ENCODE measurements at regions of chr6 and their contacts with region 1.

Region 1: GRCh38 chr6:132887204-132887603 is 72.8 kb downstream of the RPS12 start:
- DNase-seq: no peak
- H3K4me3 ChIP-seq: no peak overlapping the region
- H3K4me3 Mint-ChIP-seq: no peak overlapping the region
- H3K27ac Mint-ChIP-seq: no peak overlapping the region
- H3K4me1 ChIP-seq: no peaks in the 10 kb centered on the region
- H3K4me1 Mint-ChIP-seq: no peaks in the 10 kb centered on the region
- H3K27me3 ChIP-seq: no peaks in the 10 kb centered on the region; the same call in 1 of the 2 replicates
- H3K27me3 Mint-ChIP-seq: peaks cover 10% of the 10 kb centered on the region
- CTCF ChIP-seq: no peak

Region 2: GRCh38 chr6:132751306-132751705 is 135.9 kb before region 1 on chr6:
- CTCF ChIA-PET with region 1: no interaction called
- POLR2A ChIA-PET with region 1: no interaction called
- intact Hi-C with region 1: no loop called
- DNase-seq: no peak
- H3K4me3 ChIP-seq: no peak overlapping the region
- H3K4me3 Mint-ChIP-seq: no peak overlapping the region
- H3K27ac Mint-ChIP-seq: no peak overlapping the region
- H3K4me1 ChIP-seq: no peaks in the 10 kb centered on the region
- H3K4me1 Mint-ChIP-seq: no peaks in the 10 kb centered on the region
- H3K27me3 ChIP-seq: no peaks in the 10 kb centered on the region
- H3K27me3 Mint-ChIP-seq: peaks cover 2% of the 10 kb centered on the region
- CTCF ChIP-seq: no peak

Region 3: GRCh38 chr6:132811276-132811675 is 75.9 kb before region 1 on chr6:
- CTCF ChIA-PET with region 1: no interaction called
- POLR2A ChIA-PET with region 1: no interaction called
- intact Hi-C with region 1: no loop called
- DNase-seq: no peak
- H3K4me3 ChIP-seq: no peak overlapping the region
- H3K4me3 Mint-ChIP-seq: no peak overlapping the region
- H3K27ac Mint-ChIP-seq: no peak overlapping the region
- H3K4me1 ChIP-seq: peaks cover 5% of the 10 kb centered on the region; the same call in 1 of the 2 replicates
- H3K4me1 Mint-ChIP-seq: peaks cover 6% of the 10 kb centered on the region
- H3K27me3 ChIP-seq: no peaks in the 10 kb centered on the region
- H3K27me3 Mint-ChIP-seq: peaks cover 4% of the 10 kb centered on the region
- CTCF ChIP-seq: no peak

Region 4: GRCh38 chr6:132843316-132844043 is 43.7 kb before region 1 on chr6:
- CTCF ChIA-PET with region 1: no interaction called
- POLR2A ChIA-PET with region 1: no interaction called
- intact Hi-C with region 1: loop called (anchors 1 kb)
- DNase-seq: no peak
- H3K4me3 ChIP-seq: no peak overlapping the region
- H3K4me3 Mint-ChIP-seq: no peak overlapping the region
- H3K27ac Mint-ChIP-seq: no peak overlapping the region
- H3K4me1 ChIP-seq: no peaks in the 10 kb centered on the region
- H3K4me1 Mint-ChIP-seq: no peaks in the 10 kb centered on the region
- H3K27me3 ChIP-seq: no peaks in the 10 kb centered on the region
- H3K27me3 Mint-ChIP-seq: peaks cover 11% of the 10 kb centered on the region
- CTCF ChIP-seq: no peak

Measured in Caco-2 (cell line).